Posterior vena cava (tissue), 2 donors: ENCODE measurements at regions of chr1 and their contacts with region 1.

Region 1: GRCh38 chr1:53485478-53486394 is 26.5 kb downstream of the DMRTB1 start:
- DNase-seq: peak; percentile 94

Region 2: GRCh38 chr1:53073868-53074311 is 411.8 kb before region 1 on chr1:
- intact Hi-C with region 1: no loop called
- DNase-seq: peak; percentile 83

Region 3: DNA sequence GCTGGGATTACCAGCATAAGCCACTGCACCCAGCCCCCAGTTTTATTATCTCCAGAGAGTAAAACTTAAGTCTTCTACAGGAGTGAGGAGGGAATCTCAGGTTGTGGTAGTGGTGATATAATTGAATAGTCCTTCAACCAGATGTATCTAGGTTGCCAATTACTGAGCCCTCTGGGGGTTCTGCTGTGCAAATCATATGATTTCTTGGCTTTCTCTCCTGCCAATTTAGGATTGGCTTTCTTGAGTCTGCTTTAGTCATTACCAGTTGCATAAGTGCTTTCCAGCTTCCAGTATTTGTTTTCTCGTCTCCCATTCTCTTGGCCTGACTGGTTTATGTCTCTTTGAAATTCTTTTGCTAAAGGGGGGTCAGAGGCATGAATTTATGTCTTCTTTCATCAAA is 278.0 kb before region 1 on chr1:
- intact Hi-C with region 1: no loop called
- DNase-seq: no peak

Region 4: DNA sequence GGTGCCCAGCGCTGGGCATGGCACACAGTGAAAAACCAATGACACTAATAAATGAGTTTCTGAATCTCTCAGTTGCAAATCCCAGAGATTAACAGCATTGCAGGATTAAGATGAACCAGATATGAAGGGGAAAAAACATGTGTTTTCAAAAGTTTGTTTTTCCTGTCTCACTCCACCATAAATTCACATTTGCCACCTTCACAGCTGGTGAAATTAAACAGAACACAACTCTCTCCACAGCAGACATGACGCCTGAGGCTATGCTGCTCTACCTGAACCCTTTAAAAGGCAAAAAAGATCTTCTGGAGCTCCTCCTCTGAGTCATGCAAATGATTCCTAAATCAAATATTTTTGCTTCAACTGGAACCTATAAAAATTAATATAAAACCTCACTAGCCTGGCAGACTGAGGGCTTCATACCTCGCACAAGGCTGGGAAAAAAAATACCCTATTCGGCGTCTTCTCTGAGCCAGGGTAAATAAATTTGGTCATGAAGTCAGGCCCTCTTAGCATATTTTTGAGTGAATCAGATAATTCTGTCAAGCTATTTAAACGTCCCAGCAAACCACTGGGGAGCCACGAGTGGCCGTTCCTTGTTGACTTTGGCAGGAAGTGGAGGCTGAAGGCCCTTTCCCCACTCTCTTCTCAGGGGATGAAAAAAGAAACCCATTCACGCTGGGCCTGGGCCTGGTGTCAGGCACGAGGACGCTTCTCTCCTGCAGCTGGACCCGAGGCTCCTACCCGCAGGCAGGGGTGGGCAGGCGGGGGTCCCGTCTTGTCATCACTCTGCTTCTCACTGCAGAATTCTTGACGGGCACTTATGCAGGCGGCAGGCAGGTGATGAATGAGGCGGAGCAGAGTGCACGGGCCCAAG is 26.4 kb after region 1 on chr1:
- intact Hi-C with region 1: no loop called
- DNase-seq: no peak

Region 5: GRCh38 chr1:53592521-53592982 is 106.8 kb after region 1 on chr1:
- intact Hi-C with region 1: loop called in 1 of 2 experiments (anchors 10 kb)
- DNase-seq: peak; percentile 73

Region 6: GRCh38 chr1:53681977-53682685 is 196.4 kb after region 1 on chr1:
- intact Hi-C with region 1: loop called in 1 of 2 experiments (anchors 5 kb)
- DNase-seq: no peak

Region 7: DNA sequence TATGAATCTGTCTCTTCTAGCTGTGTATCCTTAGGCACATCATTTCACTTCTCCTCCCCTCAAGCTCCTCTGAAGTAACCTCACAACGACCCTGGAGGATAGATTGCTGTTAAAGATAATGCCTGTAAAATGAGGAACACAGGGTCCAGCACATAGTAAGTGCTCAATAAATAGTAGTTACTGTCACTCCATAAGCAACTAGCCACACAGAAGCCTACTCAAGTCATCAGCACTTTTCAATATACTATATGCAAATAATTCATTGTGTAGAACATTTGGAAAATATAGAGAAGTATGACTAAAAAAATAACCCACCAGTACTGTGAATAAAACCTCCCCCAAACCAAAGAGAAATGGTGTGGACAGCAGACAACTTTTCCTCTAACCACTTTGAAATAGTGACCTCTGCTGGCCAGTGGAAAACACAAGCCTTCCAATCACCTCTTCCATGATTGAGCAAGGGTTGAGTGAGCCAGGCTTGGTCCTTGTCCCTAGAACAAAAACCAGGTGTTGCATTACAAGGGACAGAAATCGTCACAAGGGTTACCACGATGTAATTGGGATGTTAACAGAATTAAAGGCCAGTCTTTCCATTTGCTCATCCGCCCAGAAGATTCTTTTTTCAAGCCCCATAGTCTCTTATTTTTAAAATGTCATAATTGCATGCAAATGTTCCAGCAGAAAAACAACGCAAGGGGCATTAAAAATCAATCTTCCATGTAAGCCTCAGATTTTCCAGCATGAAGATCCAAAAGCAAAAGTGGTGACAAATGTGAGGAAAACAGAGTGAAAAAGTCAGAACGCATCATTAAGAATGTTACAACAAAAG is 269.0 kb after region 1 on chr1:
- intact Hi-C with region 1: loop called (anchors 2 to 5 kb)
- DNase-seq: no peak